ENCODE measurements at regions of chr17 and their contacts with region 1.

Region 1: GRCh38 chr17:42276359-42276608 is at the start of gene STAT5B:
- DNase-seq: peak; percentile 78
- ATAC-seq: peak; percentile 75
- H3K4me3 Mint-ChIP-seq: peak within 1 kb of the TSS; percentile 98
- H3K27ac Mint-ChIP-seq: peak within 1 kb of the TSS; percentile 91
- H3K4me1 Mint-ChIP-seq: peaks cover 47% of the 10 kb centered on the region
- H3K27me3 Mint-ChIP-seq: no peaks in the 10 kb centered on the region
- total RNA-seq, gene STAT5B: 112 to 116 TPM

Region 2: DNA sequence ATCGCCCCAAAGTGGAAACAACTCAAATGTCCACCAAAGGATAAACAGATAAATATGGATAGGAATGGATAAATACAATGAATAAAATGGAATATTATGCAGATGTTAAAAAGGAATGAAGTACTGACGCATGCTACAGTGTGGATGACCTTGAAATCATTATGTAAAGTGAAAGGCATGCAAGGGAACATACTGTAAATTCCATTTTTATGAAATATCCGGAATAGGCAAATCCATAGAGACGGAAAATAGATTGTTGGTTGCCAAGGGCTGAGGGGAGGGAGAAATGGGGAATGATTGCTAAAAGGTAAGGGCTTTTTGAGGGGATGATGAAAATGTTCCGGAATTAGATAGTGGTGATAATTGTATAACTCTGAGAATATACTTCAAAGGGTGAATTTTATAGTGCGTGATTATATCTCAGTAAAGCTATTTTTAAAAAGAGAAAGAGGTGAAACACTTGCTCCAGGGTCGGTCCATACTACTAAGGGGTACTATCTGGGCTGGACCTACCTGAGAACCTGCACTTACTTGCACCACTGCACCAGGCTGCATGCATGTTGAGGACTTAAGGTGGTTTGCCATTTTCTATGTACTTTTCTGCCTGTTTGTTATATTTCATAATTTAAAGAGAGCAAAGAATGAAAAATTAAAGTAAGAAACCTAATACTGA is 35.9 kb before region 1 on chr17:
- CTCF ChIA-PET with region 1: no interaction called
- DNase-seq: no peak
- ATAC-seq: no peak
- H3K4me3 Mint-ChIP-seq: no peak overlapping the region
- H3K27ac Mint-ChIP-seq: no peak overlapping the region
- H3K4me1 Mint-ChIP-seq: peaks cover 9% of the 10 kb centered on the region
- H3K27me3 Mint-ChIP-seq: no peaks in the 10 kb centered on the region

Region 3: GRCh38 chr17:42287926-42288802 is 11.9 kb after region 1 on chr17 and contains the start of gene STAT5A:
- CTCF ChIA-PET with region 1: interaction called, 17 read pairs
- DNase-seq: peak; percentile 91
- ATAC-seq: peak; percentile 84
- H3K4me3 Mint-ChIP-seq: peak within 1 kb of the TSS; percentile 96
- H3K27ac Mint-ChIP-seq: peak within 1 kb of the TSS; percentile 97
- H3K4me1 Mint-ChIP-seq: peaks cover 57% of the 10 kb centered on the region
- H3K27me3 Mint-ChIP-seq: no peaks in the 10 kb centered on the region
- total RNA-seq, gene STAT5A: 118 to 127 TPM

Region 4: GRCh38 chr17:42571435-42572225 is 295.3 kb after region 1 on chr17:
- CTCF ChIA-PET with region 1: no interaction called
- DNase-seq: no peak
- ATAC-seq: no peak
- H3K4me3 Mint-ChIP-seq: no peak overlapping the region
- H3K27ac Mint-ChIP-seq: no peak overlapping the region
- H3K4me1 Mint-ChIP-seq: peaks cover 60% of the 10 kb centered on the region
- H3K27me3 Mint-ChIP-seq: no peaks in the 10 kb centered on the region